Activated naive CD4-positive, alpha-beta T cell treated with anti-CD3 and anti-CD28 coated beads for 36 hours (primary cell): ENCODE measurements at regions of chr20 and their contacts with region 1.

Region 1: DNA sequence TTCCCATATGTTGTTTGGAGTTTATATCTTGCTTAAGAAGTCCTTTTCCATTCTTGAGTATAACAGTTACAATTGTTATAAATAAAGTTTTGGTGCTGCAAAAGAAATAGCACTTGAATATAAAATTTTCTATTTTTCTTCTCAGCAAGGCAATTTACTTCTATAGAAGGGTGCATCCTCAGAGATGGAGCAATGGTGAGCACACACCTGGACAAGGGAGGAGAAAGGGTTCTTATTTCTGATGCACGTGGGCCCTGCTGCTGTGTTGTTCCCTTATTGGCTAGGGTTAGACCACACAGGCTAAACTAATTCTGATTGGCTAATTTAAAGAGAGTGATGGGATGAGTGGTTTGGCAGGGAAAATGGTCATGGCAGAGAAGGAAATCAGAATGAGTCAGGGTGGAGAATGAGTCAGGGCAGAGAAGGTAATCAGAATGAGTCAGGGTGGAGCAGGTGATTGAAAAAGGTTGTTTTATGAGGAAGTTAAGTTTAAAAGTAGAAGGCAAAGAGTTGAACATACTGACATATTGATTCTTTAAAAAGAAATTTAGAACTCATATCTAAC is 38.0 kb downstream of the CST8 start:
- DNase-seq: no peak
- H3K4me3 Mint-ChIP-seq: no peak overlapping the region
- H3K27ac Mint-ChIP-seq: no peak overlapping the region
- H3K4me1 Mint-ChIP-seq: peaks cover 6% of the 10 kb centered on the region
- H3K27me3 Mint-ChIP-seq: peaks cover 7% of the 10 kb centered on the region

Region 2: GRCh38 chr20:23235173-23236027 is 293.5 kb before region 1 on chr20:
- CTCF ChIA-PET with region 1: no interaction called
- intact Hi-C with region 1: no loop called
- DNase-seq: peak; percentile 48
- H3K4me3 Mint-ChIP-seq: no peak overlapping the region
- H3K27ac Mint-ChIP-seq: no peak overlapping the region
- H3K4me1 Mint-ChIP-seq: no peaks in the 10 kb centered on the region
- H3K27me3 Mint-ChIP-seq: peaks cover 8% of the 10 kb centered on the region

Region 3: GRCh38 chr20:23497536-23497935 is 31.4 kb before region 1 on chr20:
- CTCF ChIA-PET with region 1: no interaction called
- intact Hi-C with region 1: loop called (anchors 1 kb)
- DNase-seq: peak; percentile 58
- H3K4me3 Mint-ChIP-seq: no peak overlapping the region
- H3K27ac Mint-ChIP-seq: no peak overlapping the region
- H3K4me1 Mint-ChIP-seq: peaks cover 8% of the 10 kb centered on the region
- H3K27me3 Mint-ChIP-seq: peaks cover 20% of the 10 kb centered on the region

Region 4: DNA sequence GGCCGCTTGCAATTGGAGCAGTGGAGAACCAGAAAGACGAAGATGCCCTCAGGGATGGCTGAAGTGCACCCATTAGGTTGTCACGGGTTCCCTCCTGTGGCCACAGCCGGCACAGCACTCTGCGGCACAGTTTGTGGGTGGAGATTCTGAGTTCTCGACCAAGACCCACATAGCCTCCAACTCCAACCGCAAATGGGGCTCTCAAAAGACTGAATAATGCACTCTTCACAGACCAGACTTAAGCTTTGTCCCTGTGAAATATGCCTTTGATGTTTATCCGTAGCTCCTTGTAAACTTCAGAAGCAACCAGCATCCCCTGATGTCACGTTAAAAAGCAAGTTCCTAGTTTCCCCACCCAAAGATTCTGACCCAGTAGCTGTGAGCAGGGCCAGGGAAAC is 77.7 kb after region 1 on chr20:
- CTCF ChIA-PET with region 1: no interaction called
- intact Hi-C with region 1: no loop called
- DNase-seq: peak; percentile 77
- H3K4me3 Mint-ChIP-seq: no peak overlapping the region
- H3K27ac Mint-ChIP-seq: no peak overlapping the region
- H3K4me1 Mint-ChIP-seq: no peaks in the 10 kb centered on the region
- H3K27me3 Mint-ChIP-seq: peaks cover 6% of the 10 kb centered on the region